AG04449 (cell line): ENCODE measurements at regions of chr2 and their contacts with region 1.

Region 1: DNA sequence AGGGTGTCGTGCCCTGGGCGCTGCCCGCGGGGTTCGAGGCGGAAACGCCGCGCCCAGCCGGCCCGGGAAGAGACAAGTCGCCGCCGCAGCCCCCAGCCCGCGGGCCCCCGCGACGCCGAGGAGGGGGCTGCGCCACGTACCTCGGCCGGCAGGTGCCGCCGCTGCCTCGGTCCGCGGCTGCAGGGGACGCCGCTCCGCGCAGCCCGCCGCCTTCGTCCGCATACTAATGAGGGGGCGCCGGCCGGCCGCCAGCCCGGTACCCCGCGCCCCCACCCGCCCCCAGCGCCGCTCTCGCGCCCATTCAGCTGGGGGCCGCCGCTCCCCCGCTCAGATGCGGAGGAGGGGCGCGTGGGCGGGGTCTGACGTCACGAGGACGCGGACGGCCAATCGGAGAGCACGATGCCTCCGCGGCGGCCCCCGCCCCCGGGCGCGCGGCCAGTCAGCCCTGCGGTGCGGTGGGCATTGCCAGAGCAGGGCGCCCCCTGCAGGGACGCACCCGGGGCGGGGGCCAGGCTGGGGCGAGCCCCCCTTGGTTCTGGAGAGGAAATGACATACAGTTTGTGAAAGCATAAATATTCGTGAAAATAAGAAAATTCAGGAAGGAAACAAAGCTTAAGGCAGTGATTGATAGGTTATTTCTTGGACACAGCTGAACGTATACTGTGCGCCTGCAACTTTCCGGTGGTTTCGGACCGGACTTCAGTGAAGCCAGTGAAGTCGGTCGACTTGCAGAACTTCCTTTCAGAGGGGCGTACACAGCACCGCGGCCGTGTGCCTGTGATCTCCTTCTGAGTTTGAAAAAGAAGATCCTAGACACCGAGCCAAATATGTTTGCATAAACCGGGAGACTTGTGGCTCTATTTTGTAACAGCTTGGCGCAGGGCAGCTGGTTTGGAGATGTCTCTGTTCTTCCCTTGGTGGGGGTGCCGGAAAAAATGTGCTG is at the start of gene ST3GAL5:
- DNase-seq: no peak
- H3K4me3 ChIP-seq: peak within 1 kb of the TSS; percentile 64
- CTCF ChIP-seq: peak; percentile 85

Region 2: DNA sequence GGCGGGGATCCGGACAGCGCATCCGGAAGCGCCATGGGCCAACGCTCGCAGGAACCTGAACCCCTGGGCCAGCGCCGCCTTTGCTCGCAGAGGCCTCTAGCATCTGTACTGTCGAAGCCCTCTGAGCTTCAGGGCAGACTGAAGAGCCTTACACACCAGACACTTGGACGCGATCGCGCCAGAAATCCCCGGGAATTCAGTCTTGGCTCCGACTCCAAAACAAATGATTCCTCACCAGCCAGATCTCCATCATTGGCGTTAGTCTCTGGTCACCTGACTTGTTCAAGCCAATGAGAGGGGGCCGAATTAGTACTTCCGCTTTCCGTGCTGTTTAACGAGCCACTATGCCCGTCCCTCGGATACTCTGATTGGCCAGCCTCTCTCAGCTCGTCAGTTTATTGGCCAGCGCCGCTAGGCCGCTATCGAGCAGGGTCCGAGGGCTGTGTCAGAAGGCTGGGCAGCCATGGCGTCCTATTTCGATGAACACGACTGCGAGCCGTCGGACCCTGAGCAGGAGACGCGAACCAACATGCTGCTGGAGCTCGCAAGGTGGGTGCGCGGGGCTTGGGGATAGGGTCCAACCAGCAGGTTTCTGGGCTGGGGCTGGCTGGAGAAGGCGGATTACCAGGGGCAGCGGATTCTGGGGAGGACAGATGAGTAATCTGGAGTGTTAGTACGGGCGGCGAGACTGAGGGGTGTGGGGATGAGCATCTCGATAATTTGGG is 293.5 kb before region 1 on chr2 and contains the start of gene RNF181:
- CTCF ChIA-PET with region 1: no interaction called
- POLR2A ChIA-PET with region 1: no interaction called
- DNase-seq: peak; percentile 97
- H3K4me3 ChIP-seq: peak within 1 kb of the TSS; percentile 100
- CTCF ChIP-seq: no peak

Region 3: DNA sequence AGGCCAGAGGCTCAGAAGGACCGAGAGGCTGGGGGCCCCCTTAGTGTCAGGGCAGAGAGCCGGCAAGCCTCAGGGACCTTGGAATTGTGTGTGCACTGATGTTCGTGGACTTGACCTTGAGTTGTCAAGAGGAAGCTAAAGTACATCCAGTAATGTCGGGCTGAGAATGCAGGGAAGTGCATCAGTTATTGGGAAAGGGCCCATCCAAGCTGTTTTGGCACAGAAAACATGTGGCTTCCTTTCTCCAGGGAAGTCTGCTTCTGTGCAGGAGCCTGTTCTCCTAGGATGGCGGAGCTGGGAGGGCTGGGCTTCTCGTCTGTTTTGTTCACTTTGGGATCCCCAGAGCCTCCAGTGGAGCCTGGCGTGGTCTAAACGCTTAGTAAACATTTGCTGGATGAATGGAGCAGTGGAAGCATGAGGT is 111.5 kb before region 1 on chr2:
- CTCF ChIA-PET with region 1: no interaction called
- POLR2A ChIA-PET with region 1: no interaction called
- DNase-seq: no peak
- H3K4me3 ChIP-seq: no peak overlapping the region
- CTCF ChIP-seq: no peak

Region 4: GRCh38 chr2:85797921-85798320 is 91.0 kb before region 1 on chr2:
- CTCF ChIA-PET with region 1: no interaction called
- POLR2A ChIA-PET with region 1: no interaction called
- DNase-seq: no peak
- H3K4me3 ChIP-seq: no peak overlapping the region
- CTCF ChIP-seq: peak; percentile 43

Region 5: DNA sequence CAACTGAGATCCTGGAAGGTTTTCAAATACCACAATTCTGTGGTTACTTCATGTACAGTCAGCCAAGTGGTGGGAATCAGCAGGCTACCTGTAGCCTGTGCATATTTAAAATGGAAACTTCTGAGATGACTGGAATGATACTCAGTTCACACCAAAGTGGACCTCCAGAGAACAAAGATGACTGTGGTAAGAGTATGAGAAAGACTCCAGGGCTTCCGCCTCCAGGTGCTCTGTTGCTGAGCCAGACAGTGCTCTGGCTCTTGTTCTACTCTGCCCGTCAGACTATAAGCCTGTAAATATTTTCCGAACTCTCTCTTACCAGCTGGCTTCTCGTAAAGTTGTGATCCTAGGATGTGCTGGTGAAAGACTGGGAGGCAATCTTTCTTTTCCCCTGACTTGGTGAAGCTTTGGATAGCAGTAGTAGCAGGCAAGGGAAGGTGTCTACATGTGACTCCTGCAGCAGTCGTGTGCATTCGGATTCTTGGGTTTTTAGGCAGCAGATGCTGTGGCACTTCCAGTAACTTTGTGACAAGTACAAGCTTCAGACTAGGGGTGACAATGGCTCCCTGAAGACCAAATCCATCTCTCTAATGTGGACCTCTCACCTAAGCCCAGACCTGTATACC is 23.3 kb before region 1 on chr2:
- CTCF ChIA-PET with region 1: interaction called, 29 read pairs
- POLR2A ChIA-PET with region 1: interaction called, 4 read pairs
- DNase-seq: no peak
- H3K4me3 ChIP-seq: no peak overlapping the region
- CTCF ChIP-seq: no peak

Region 6: GRCh38 chr2:85878719-85879385 is 10.1 kb before region 1 on chr2:
- CTCF ChIA-PET with region 1: interaction called, 30 read pairs
- POLR2A ChIA-PET with region 1: interaction called, 3 read pairs
- DNase-seq: no peak
- H3K4me3 ChIP-seq: no peak overlapping the region
- CTCF ChIP-seq: no peak

Region 7: GRCh38 chr2:85911814-85912692 is 23.1 kb after region 1 on chr2:
- CTCF ChIA-PET with region 1: interaction called, 21 read pairs
- POLR2A ChIA-PET with region 1: interaction called, 3 read pairs
- DNase-seq: no peak
- H3K4me3 ChIP-seq: no peak overlapping the region
- CTCF ChIP-seq: no peak

Region 8: DNA sequence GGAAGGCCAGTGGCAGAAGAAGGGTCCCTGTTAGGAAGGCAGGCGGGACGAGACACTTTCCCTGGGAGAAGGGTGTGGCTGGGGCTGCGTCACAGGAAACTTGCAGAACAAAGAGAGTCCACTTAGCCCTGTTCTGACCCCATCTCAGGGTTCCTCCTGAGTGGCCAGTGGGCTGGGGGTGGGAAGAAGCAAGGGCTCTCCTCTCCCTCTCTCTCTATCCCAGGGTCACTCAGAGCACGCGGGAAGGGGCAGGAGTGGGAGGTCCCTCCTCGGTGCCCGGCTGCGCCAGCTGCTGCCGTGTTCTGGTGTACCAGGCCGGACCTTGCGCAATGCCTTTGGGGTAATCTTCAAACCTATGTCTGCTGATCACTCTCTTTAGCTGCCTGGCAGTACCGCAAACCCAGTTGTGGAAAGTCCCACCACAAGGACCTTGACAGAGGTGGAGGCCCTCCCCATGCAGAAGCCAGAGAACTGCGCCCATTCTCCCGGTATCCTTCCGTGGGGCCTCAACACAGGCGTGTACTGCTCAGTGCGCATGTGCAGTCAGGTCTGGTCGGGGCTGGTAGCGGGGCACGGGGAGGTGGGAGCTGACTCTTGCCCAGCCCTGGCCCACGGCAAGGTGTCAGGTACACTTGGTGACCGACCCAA is 47.6 kb after region 1 on chr2:
- CTCF ChIA-PET with region 1: interaction called, 12 read pairs
- POLR2A ChIA-PET with region 1: no interaction called
- DNase-seq: no peak
- H3K4me3 ChIP-seq: no peak overlapping the region
- CTCF ChIP-seq: no peak

Region 9: DNA sequence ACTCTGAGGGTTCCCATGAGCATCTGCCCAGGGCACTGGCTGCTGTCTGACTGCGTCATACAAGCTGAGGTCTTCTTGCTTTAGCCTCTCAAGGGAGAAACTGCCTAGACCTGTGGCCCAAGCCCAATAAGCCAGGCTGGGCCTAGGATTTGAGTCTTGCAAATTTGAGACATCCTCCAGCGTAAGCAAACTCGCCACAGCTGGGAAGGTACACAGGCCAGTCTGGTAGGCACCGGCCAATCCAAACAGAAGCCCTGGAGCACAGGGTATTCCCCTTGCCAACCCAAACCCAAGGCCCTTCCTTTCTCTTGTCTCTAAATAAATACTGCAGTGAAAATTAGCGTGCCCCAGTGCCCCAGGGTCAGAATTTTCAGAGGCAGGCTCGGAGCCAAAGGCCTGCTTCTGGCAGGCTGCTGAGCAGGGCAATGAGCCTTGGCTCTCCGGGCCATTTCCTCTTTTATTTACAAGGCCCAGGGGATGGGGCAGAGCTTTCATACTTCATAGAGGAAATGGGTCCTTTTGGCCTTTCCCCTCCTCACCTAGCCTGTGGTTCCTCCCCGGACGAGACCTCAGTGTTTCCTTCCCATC is 183.4 kb after region 1 on chr2:
- CTCF ChIA-PET with region 1: interaction called, 100 read pairs
- POLR2A ChIA-PET with region 1: no interaction called
- DNase-seq: no peak
- H3K4me3 ChIP-seq: no peak overlapping the region
- CTCF ChIP-seq: no peak